Activated naive CD4-positive, alpha-beta T cell treated with anti-CD3 and anti-CD28 coated beads, Interleukin-2, amount 10 ng/mL, durations not matched to agents 7 days and 5 days (primary cell): ENCODE measurements at regions of chr3 and their contacts with region 1.

Region 1: GRCh38 chr3:12135029-12135657 is 23.6 kb downstream of the TIMP4 start:
- DNase-seq: peak; percentile 74
- H3K4me3 Mint-ChIP-seq: no peak overlapping the region
- H3K27ac Mint-ChIP-seq: no peak overlapping the region
- H3K4me1 Mint-ChIP-seq: no peaks in the 10 kb centered on the region
- H3K27me3 Mint-ChIP-seq: peaks cover 13% of the 10 kb centered on the region

Region 2: GRCh38 chr3:12054256-12054655 is 80.9 kb before region 1 on chr3:
- CTCF ChIA-PET with region 1: no interaction called
- DNase-seq: no peak
- H3K4me3 Mint-ChIP-seq: no peak overlapping the region
- H3K27ac Mint-ChIP-seq: no peak overlapping the region
- H3K4me1 Mint-ChIP-seq: no peaks in the 10 kb centered on the region
- H3K27me3 Mint-ChIP-seq: peaks cover 8% of the 10 kb centered on the region

Region 3: GRCh38 chr3:12175844-12176453 is 40.8 kb after region 1 on chr3:
- CTCF ChIA-PET with region 1: interaction called, 54 read pairs
- DNase-seq: peak; percentile 38
- H3K4me3 Mint-ChIP-seq: no peak overlapping the region
- H3K27ac Mint-ChIP-seq: no peak overlapping the region
- H3K4me1 Mint-ChIP-seq: no peaks in the 10 kb centered on the region
- H3K27me3 Mint-ChIP-seq: peaks cover 4% of the 10 kb centered on the region

Region 4: GRCh38 chr3:12253561-12254343 is 118.6 kb after region 1 on chr3:
- CTCF ChIA-PET with region 1: no interaction called
- DNase-seq: no peak
- H3K4me3 Mint-ChIP-seq: no peak overlapping the region
- H3K27ac Mint-ChIP-seq: no peak overlapping the region
- H3K4me1 Mint-ChIP-seq: no peaks in the 10 kb centered on the region
- H3K27me3 Mint-ChIP-seq: peaks cover 13% of the 10 kb centered on the region

Region 5: DNA sequence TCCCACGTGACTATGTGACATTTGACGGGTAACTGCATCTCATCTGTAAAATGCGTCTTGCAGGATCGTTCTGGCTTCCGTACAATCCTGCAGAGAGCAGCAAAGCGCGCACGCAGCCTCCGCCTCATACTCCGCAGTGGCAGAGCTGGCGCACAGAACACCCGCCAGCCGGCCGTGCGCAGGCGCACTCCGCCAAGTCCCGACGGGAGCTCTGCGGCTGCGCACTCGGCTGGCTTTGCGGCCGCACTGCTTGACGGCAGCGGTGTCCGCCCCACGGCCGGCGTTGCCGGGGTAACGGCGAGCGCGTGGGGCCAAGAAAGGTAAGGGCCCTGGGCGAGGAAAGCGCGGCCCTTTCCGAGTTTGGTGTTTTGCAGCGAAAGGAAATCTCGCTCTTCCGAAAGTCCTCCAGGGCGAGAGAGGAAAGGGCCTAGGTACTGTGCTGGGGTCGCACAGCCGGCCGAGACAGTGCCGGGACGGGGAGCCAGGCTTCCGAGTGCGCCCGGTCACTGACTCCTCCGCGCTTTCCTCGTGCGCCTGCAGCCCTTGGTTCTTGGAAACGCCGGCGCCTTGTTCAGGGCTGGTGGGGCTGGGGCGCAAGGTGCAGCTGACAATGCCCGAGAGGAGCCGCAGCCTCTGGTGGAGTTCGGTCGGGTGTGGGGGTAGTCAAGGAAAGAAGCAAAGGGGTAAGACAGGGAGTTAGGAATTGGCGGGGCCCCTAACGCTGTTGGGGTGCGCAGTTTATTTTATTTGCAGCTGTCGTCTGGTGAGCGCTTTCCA is 349.2 kb after region 1 on chr3 and contains the start of gene TSEN2:
- CTCF ChIA-PET with region 1: interaction called, 145 read pairs
- DNase-seq: peak; percentile 96
- H3K4me3 Mint-ChIP-seq: peak within 1 kb of the TSS; percentile 88
- H3K27ac Mint-ChIP-seq: peak within 1 kb of the TSS; percentile 99
- H3K4me1 Mint-ChIP-seq: peaks cover 36% of the 10 kb centered on the region
- H3K27me3 Mint-ChIP-seq: peaks cover 7% of the 10 kb centered on the region